Endothelial cell of umbilical vein (primary cell): ENCODE measurements at regions of chr2 and their contacts with region 1.

Region 1: DNA sequence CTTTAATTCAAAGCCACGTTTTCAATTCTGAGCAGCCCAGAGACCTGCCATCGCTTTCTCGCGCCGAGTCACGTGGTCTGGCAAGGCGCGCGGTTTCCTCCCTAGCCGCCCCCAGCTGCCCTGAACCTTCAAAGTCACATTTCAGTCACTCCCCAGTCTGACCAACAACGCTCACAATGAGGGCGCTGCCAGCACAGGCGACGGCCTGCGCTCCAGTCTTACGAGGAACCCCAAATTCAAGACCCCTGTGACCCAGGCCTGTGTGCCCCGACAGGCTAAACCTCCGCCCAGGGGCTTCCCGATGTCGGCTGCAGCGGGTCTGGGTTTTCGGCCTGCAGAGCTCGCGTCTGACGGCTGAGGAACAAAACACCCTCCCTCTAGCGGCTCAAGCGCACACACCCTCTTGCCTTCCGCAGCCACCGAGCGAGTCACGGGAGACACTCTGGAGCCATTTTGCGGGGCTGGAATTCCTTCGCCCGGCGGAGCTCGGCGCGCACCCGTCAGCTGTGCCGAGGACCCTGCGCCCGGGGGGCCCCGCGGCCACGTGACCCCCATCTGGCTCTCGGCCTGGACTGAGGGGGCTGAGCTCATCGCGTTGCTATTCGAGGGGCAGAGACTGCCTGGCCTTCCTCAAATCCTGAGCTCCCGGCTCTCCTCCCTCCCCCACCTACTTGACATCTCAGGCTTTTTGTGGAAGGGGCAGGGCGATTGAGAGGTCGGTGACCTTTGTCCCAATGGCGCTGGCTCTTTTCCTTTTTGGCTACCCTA is 69.9 kb upstream of the ITGB6 start:
- DNase-seq: peak; percentile 92
- H3K4me3 ChIP-seq: peak overlapping the region in 2 of 3 experiments; percentile 34 to 44
- H3K27ac ChIP-seq: peak overlapping the region; percentile 93
- H3K4me1 ChIP-seq: peaks cover 25% of the 10 kb centered on the region
- H3K27me3 ChIP-seq: no peaks in the 10 kb centered on the region
- CTCF ChIP-seq: peak; percentile 65 to 79
- POLR2A ChIP-seq: peak; percentile 76

Region 2: DNA sequence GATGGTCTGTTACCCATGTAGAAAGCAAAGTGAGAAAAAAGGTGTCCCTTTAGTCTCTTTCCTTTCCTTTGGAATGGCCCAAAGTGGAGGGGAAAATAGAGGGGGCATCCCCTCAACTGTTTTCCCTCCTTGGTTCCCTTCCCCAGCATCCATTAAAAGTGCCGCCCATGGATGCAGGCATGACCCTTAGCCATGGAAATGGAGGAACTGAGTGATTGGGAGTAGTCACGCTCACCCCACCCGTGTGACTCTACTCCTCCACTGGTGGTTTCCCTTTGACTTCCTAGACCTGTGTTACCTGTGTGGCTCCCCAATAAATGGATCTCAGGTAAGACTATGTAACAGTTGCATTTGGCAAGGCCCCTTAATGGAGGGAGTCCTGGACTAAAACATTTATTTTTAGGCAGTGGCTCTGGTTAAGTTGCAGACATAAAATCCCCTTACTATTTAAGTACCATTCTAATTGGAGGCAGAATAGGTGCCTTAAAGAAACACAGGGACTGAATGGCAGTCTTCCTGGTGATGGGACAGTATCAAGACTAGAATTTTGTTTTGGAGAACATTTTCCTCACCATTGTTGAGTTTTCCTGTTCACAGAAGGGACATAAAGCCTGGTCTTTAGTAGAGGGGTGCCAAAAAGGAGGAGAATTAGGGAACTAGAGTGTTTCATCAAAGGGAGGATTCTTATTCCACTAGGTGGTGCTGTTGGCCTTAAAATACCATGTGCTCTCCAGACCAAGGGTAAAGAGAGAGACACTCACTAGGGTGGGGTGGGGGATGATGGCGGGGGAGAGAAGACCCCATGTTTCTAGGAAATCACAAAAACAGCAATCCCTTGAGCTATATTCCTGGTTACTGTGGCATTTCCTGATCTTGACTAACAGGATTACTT is 181.9 kb before region 1 on chr2:
- CTCF ChIA-PET with region 1: no interaction called
- POLR2A ChIA-PET with region 1: no interaction called
- dilution Hi-C with region 1: no loop called
- intact Hi-C with region 1: no loop called
- DNase-seq: no peak
- H3K4me3 ChIP-seq: no peak overlapping the region
- H3K27ac ChIP-seq: no peak overlapping the region
- H3K4me1 ChIP-seq: no peaks in the 10 kb centered on the region
- H3K27me3 ChIP-seq: no peaks in the 10 kb centered on the region
- CTCF ChIP-seq: peak; percentile 4 to 21
- POLR2A ChIP-seq: no peak

Region 3: DNA sequence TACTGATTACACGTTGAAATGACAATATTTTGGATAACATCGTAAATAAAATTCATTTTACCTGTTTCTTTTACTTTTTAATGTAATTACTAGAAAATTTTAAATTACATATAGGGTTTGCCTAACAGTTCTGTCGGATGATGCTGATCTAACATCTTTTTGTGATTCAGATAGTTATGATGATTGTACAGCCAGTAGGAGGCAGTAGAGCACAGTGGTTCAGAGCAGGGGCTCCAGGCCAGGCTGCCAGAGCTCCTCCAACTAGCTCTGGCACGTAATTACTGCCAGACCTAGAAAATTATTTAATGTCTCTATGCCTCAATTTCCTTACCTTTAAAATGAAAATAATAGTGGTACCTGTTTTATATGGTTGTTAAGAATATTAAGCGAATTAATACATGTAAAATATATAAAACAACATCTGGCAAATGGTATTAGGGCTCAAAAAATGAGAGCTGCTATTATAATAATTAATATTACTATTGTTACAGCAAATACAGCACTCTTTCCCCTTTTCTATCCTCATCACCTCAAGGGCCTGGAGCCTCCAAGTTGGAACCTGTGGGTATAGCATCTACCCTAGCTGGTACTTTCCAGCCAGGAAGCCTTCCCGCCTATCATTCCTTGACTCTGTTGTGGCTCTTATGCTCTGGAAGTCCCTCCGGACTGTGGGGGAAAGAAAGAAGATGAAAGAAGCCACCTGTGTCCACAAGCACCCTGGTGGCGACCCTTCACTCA is 159.9 kb before region 1 on chr2:
- CTCF ChIA-PET with region 1: interaction called, 57 read pairs
- POLR2A ChIA-PET with region 1: no interaction called
- dilution Hi-C with region 1: no loop called
- intact Hi-C with region 1: loop called (anchors 1 kb)
- DNase-seq: peak; percentile 83
- H3K4me3 ChIP-seq: no peak overlapping the region
- H3K27ac ChIP-seq: no peak overlapping the region
- H3K4me1 ChIP-seq: no peaks in the 10 kb centered on the region
- H3K27me3 ChIP-seq: no peaks in the 10 kb centered on the region
- CTCF ChIP-seq: peak; percentile 66 to 72
- POLR2A ChIP-seq: no peak

Region 4: GRCh38 chr2:160224060-160224459 is 45.9 kb before region 1 on chr2:
- CTCF ChIA-PET with region 1: interaction called, 11 read pairs
- POLR2A ChIA-PET with region 1: no interaction called
- dilution Hi-C with region 1: no loop called
- intact Hi-C with region 1: loop called (anchors 1 kb)
- DNase-seq: peak; percentile 87
- H3K4me3 ChIP-seq: peak overlapping the region in 1 of 3 experiments; percentile 41
- H3K27ac ChIP-seq: peak overlapping the region; percentile 95
- H3K4me1 ChIP-seq: peaks cover 80% of the 10 kb centered on the region
- H3K27me3 ChIP-seq: no peaks in the 10 kb centered on the region
- CTCF ChIP-seq: no peak
- POLR2A ChIP-seq: no peak

Region 5: DNA sequence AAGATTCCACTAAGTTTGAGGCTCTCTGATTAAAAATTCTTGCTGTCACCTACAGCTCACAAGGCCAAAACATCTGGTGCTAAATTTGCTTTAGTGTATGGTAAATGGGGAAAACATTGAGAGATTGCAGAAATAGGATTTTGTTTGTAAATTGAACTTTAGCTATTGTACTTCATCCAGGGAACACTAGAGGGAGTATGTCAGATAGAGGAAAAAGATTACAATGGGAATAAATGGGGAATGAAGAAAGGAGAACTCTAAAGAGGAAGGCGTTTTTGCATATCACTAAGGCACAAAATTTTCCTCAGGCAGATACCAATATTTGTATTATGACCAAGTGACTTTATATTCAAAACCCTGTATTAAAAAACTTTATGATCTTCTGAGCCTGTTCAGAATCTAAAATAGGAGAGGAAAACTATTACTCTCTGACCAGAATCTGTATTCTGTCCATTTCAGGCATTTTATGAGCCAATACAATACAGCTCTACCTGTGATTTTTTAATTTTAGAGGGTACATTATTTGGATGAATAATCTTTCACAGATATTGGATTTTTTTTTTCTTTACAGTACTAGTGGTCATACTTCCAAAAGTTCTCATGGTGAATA is 17.6 kb before region 1 on chr2:
- CTCF ChIA-PET with region 1: interaction called, 31 read pairs
- POLR2A ChIA-PET with region 1: no interaction called
- dilution Hi-C with region 1: no loop called
- intact Hi-C with region 1: no loop called
- DNase-seq: peak; percentile 58
- H3K4me3 ChIP-seq: no peak overlapping the region
- H3K27ac ChIP-seq: no peak overlapping the region
- H3K4me1 ChIP-seq: no peaks in the 10 kb centered on the region
- H3K27me3 ChIP-seq: no peaks in the 10 kb centered on the region
- CTCF ChIP-seq: peak; percentile 52 to 57
- POLR2A ChIP-seq: no peak

Region 6: GRCh38 chr2:160345071-160345764 is 75.2 kb after region 1 on chr2:
- CTCF ChIA-PET with region 1: no interaction called
- POLR2A ChIA-PET with region 1: no interaction called
- dilution Hi-C with region 1: no loop called
- intact Hi-C with region 1: no loop called
- DNase-seq: no peak
- H3K4me3 ChIP-seq: no peak overlapping the region
- H3K27ac ChIP-seq: no peak overlapping the region
- H3K4me1 ChIP-seq: no peaks in the 10 kb centered on the region
- H3K27me3 ChIP-seq: no peaks in the 10 kb centered on the region
- CTCF ChIP-seq: no peak
- POLR2A ChIP-seq: no peak

Region 7: GRCh38 chr2:160375802-160376469 is 105.9 kb after region 1 on chr2:
- CTCF ChIA-PET with region 1: interaction called, 4 read pairs
- POLR2A ChIA-PET with region 1: no interaction called
- dilution Hi-C with region 1: no loop called
- intact Hi-C with region 1: loop called (anchors 2 kb)
- DNase-seq: peak; percentile 66
- H3K4me3 ChIP-seq: peak overlapping the region in 1 of 3 experiments; percentile 22
- H3K27ac ChIP-seq: peak overlapping the region; percentile 85
- H3K4me1 ChIP-seq: peaks cover 97% of the 10 kb centered on the region
- H3K27me3 ChIP-seq: no peaks in the 10 kb centered on the region
- CTCF ChIP-seq: no peak
- POLR2A ChIP-seq: peak; percentile 58

Region 8: DNA sequence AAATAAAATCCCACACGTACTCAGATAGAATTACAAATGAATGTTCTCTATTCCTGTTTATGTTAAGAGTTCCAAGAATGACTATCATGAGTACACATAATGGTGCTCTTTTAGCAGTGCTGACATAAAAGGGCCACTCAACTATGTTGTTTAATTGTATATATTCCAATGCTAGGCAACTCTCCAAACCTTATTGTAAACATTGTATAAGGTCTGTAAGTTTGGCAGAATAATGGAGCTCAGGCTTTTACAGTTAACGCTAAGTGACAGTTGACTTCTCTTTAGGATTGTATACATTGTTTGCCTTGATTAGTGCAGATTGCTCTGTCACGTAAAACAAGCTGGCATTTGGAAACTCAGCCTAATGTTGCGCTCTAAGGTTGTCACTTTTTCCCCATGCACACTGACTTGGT is 202.9 kb after region 1 on chr2:
- CTCF ChIA-PET with region 1: no interaction called
- POLR2A ChIA-PET with region 1: no interaction called
- dilution Hi-C with region 1: no loop called
- intact Hi-C with region 1: no loop called
- DNase-seq: no peak
- H3K4me3 ChIP-seq: no peak overlapping the region
- H3K27ac ChIP-seq: no peak overlapping the region
- H3K4me1 ChIP-seq: no peaks in the 10 kb centered on the region
- H3K27me3 ChIP-seq: no peaks in the 10 kb centered on the region
- CTCF ChIP-seq: no peak
- POLR2A ChIP-seq: no peak

Region 9: GRCh38 chr2:160994141-160995002 is 724.4 kb after region 1 on chr2:
- CTCF ChIA-PET with region 1: interaction called, 23 read pairs
- POLR2A ChIA-PET with region 1: no interaction called
- dilution Hi-C with region 1: no loop called
- intact Hi-C with region 1: no loop called
- DNase-seq: peak; percentile 86
- H3K4me3 ChIP-seq: no peak overlapping the region
- H3K27ac ChIP-seq: no peak overlapping the region
- H3K4me1 ChIP-seq: peaks cover 2% of the 10 kb centered on the region
- H3K27me3 ChIP-seq: no peaks in the 10 kb centered on the region
- CTCF ChIP-seq: peak; percentile 58 to 70
- POLR2A ChIP-seq: no peak